Activated naive CD4-positive, alpha-beta T cell treated with anti-CD3 and anti-CD28 coated beads for 36 hours (primary cell): ENCODE measurements at regions of chr17 and their contacts with region 1.

Region 1: DNA sequence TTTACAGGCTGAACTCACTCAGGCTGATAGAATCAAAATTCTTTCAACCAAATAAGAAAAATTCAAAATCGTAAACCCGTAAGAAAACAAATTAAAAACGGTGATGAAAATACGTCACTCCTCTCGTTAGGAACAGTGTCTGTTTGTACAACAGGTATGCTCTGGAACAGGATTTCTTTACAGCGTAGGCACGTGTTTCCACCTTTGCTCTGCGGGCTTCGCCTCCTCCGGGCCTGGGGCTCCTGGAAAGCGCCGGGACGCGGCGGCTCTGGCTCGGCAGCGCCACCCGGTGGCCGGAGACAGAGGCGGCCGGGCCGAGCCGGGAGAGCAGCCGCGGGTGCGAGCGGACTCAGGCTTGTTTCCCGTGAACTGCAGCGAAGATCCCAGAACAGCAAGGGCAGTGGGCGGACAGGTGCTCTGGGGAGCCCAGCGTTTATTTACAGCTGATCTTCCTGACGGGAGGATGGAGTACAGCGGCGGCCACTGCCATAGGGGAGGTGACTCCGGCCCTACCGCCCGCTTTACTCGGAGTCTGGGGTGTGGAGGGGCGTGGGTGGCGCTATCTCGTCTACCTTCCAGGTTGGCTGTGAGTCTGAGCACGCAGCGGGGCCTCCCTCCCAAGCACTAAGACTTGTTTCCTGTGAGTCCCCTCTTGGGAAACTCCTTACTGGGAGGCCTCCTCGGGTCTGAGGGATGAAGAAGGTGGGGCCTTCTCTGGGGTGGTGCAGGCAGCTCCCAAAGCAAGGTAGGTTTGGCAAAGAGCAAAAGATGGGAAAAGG is 40.5 kb upstream of the ATP2A3 start:
- DNase-seq: peak; percentile 62
- H3K4me3 Mint-ChIP-seq: no peak overlapping the region
- H3K27ac Mint-ChIP-seq: no peak overlapping the region
- H3K4me1 Mint-ChIP-seq: peaks cover 4% of the 10 kb centered on the region
- H3K27me3 Mint-ChIP-seq: no peaks in the 10 kb centered on the region

Region 2: GRCh38 chr17:3865176-3865575 is 139.5 kb before region 1 on chr17:
- CTCF ChIA-PET with region 1: interaction called, 7 read pairs
- intact Hi-C with region 1: loop called (anchors 1 kb)
- DNase-seq: no peak
- H3K4me3 Mint-ChIP-seq: no peak overlapping the region
- H3K27ac Mint-ChIP-seq: no peak overlapping the region
- H3K4me1 Mint-ChIP-seq: no peaks in the 10 kb centered on the region
- H3K27me3 Mint-ChIP-seq: no peaks in the 10 kb centered on the region